ENCODE measurements at regions of chr6 and their contacts with region 1.

Region 1: DNA sequence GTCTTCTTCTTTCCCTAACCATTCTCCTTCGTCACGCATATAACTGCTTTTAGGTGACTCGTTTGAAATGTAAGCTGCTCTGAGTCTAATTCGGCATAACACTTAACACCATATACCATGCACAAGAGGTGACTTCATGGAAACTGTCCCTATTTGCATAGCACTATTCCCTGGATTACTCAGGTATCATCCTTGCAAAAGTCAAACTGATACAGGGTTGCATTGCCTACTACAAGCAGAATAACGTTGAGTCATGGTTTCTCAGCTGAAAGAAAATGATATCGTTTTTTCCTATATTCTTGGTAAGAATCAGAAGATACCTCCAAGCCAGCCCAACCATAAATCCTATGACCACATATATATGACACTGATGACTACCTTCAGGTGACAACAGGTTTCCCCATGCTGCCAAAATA is 227.5 kb downstream of the ATXN1 start:
- DNase-seq: no peak
- H3K4me3 ChIP-seq: no peak overlapping the region
- H3K27me3 ChIP-seq: no peaks in the 10 kb centered on the region
- CTCF ChIP-seq: no peak

Region 2: DNA sequence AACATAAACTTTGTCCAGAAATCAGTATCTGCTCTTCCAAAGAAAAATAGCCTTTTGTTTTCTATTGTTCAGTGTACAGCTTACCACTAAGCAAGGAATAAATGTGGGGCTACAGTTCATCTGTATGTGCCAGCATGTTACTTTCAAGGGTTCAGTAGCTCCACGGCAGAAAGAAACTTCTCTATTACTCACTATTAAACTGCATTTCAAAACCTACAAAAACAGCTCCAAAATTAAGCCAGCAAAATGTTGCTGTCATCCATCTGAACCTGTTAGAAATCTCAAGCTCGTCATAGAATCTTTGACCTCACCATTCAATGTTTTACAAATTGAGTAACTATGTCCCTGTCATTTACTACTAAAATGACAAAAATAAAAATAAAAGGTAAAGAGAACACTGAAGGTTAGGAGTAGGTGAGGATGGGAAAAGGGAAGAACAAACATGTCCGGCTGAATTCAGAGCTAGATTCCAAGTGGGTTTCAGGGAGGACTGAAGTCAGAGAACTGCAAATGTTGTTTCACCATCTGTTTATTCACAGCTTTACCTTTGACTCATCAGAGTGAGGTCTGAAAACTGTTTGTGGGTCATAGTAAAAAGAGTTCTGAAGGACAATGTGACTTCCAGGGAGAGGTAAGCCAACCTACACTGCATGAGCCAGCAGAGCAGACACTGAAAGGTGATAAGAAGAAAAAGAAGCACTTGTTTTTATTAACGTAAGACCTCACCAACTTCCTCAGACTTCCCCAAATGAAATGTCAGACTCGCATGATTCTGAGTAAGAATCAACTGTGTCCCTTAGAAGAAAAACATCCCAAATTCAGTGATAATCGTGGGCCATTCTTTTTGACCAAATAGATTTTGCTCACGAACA is 165.5 kb after region 1 on chr6:
- CTCF ChIA-PET with region 1: no interaction called
- POLR2A ChIA-PET with region 1: interaction called, 13 read pairs
- DNase-seq: no peak
- H3K4me3 ChIP-seq: no peak overlapping the region
- H3K27me3 ChIP-seq: no peaks in the 10 kb centered on the region
- CTCF ChIP-seq: no peak

Measured in BJ (cell line).